CD8-positive, alpha-beta T cell (primary cell): ENCODE measurements at regions of chr4 and their contacts with region 1.

Region 1: DNA sequence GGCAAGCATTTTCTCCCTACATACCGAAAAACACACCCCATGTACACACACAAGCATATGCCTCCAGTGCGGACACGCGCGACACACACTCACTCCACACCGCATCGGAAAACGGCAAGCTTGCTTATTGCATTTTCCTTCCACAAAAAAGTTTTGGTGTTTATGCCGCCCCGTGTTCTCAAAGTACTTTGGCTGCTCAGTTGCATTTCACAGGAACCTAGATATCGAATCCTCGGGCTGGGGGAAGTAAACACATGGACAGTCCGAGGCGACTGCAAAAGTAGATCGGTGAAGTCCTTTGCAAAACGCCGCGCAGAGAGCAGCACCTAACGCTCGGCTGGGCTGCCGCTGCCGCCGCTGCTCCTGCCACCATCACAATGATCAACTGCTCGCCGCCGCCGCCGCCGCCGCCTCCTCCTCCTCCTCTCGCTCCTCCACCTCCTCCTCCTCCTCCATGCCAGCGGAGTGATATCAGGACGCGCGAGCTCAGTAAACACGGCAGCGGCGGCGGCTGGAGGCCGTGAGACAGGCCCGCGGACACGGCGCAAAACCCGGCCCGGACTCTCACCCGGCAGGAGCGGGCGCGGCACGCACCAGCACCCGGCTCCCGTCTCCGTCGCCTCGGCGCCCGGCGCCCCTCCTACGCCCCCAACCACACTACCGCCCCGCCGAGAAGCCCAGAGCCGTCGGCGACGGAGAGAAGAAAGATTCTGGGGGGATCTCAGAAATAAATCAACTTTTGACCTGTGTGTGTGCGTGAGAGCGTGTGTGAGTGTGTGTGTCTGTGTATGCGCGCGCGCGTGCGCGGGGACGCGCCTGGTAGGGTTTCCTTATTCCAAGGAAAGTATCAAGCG is at the start of gene MAML3:
- DNase-seq: peak; percentile 67 to 88 (median 83)
- ATAC-seq: peak; percentile 12
- H3K4me3 ChIP-seq: peak within 1 kb of the TSS; percentile 69 to 75
- H3K4me3 Mint-ChIP-seq: peak within 1 kb of the TSS; percentile 97
- H3K27ac ChIP-seq: peak within 1 kb of the TSS; percentile 12 to 78
- H3K27ac Mint-ChIP-seq: peak within 1 kb of the TSS; percentile 92
- H3K4me1 ChIP-seq: peaks cover 28% of the 10 kb centered on the region
- H3K4me1 Mint-ChIP-seq: peaks cover 40% of the 10 kb centered on the region
- H3K27me3 ChIP-seq: no peaks in the 10 kb centered on the region
- H3K27me3 Mint-ChIP-seq: no peaks in the 10 kb centered on the region
- CTCF ChIP-seq: no peak
- total RNA-seq, gene MAML3: 2.7 TPM

Region 2: DNA sequence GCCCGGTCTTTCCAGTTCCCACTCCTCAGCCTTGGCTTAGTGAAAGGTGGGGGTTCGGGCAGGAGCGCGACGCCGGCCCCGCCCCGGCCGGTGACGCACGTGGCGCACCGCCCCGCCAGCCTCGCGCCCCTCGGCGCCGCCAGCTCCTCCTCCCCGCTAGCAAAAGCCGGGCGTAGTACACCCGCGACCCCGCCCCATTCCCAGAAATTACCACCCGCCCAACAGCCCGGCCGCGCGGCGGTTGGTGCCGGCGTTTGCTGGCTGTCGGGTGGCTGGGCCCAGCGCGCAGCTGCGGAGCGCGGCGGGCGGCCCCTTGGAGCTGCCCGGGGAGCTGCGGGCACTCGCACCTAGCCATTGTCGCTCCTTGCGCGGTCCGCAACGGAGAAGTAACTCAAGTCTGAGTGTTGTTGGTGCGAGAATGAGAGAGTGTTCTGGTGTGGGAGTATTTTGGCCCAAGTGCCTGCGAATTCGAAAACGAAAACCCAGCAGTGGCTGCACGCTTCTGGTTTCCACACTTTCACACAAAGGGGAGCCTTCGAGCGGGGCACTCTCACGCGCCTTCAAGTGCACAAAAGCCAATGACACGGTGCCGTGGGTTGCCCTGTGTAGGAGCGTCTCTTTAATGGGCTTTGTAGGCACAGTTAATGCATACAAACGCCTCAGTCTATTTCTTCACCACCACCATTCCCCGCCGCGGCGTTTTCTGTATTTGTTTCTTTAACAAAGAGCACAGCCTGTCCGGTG is 975.9 kb before region 1 on chr4:
- CTCF ChIA-PET with region 1: no interaction called
- POLR2A ChIA-PET with region 1: no interaction called
- intact Hi-C with region 1: loop called in 1 of 2 experiments (anchors 5 kb)
- DNase-seq: peak; percentile 73 to 94 (median 88)
- ATAC-seq: peak; percentile 73
- H3K4me3 ChIP-seq: peak overlapping the region; percentile 73 to 99
- H3K4me3 Mint-ChIP-seq: peak overlapping the region; percentile 89
- H3K27ac ChIP-seq: peak overlapping the region; percentile 54 to 67
- H3K27ac Mint-ChIP-seq: peak overlapping the region; percentile 85
- H3K4me1 ChIP-seq: peaks cover 5% of the 10 kb centered on the region
- H3K4me1 Mint-ChIP-seq: peaks cover 19% of the 10 kb centered on the region
- H3K27me3 ChIP-seq: no peaks in the 10 kb centered on the region
- H3K27me3 Mint-ChIP-seq: no peaks in the 10 kb centered on the region
- CTCF ChIP-seq: no peak

Region 3: GRCh38 chr4:139214039-139214534 is 939.9 kb before region 1 on chr4:
- CTCF ChIA-PET with region 1: no interaction called
- POLR2A ChIA-PET with region 1: no interaction called
- intact Hi-C with region 1: no loop called
- DNase-seq: peak in 2 of 9 experiments; percentile 5 to 32
- ATAC-seq: no peak
- H3K4me3 ChIP-seq: no peak overlapping the region
- H3K4me3 Mint-ChIP-seq: no peak overlapping the region
- H3K27ac ChIP-seq: no peak overlapping the region
- H3K27ac Mint-ChIP-seq: no peak overlapping the region
- H3K4me1 ChIP-seq: no peaks in the 10 kb centered on the region
- H3K4me1 Mint-ChIP-seq: peaks cover 2% of the 10 kb centered on the region
- H3K27me3 ChIP-seq: peaks cover 0 to 2% of the 10 kb centered on the region in 2 experiments
- H3K27me3 Mint-ChIP-seq: no peaks in the 10 kb centered on the region
- CTCF ChIP-seq: no peak

Region 4: DNA sequence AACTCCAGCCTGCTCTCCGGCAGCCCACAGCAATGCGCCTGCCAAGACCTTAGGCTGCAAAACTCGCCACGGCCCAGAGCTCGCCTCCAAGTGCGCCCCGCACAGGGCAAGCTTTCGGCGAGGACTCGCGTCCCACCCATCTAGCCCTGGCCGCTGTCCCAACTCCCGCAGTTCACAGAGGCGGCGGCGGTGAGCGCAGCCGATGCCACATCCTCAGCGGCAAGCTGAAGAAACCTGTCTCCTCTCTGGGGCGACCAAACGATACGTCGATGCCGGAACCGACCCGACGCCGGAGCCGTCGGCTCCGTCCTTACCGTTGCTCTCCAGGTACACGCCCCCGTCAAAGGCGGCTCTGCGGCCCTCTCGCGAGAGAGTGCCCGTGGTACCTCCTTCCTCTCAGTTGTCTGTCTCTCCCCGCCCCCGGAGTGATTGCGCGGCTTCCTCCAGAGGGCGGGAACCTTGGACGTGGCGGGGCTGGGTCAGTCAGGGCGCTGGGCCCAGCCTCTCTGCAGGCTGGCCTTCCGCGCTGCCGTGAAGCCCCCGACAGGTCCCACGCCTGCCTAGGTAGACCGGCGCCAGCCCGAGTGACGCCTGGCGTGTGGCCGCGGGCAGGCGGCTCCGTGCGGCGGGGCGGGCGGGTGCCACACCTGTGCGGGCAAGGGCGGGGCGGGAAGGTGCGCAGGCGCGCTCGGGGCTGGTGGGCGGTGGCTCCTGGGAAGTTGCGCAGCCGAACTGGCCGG is 700.4 kb before region 1 on chr4:
- CTCF ChIA-PET with region 1: no interaction called
- POLR2A ChIA-PET with region 1: no interaction called
- intact Hi-C with region 1: loop called (anchors 2 to 10 kb)
- DNase-seq: peak; percentile 92 to 98 (median 96)
- ATAC-seq: peak; percentile 86
- H3K4me3 ChIP-seq: peak overlapping the region; percentile 90 to 91
- H3K4me3 Mint-ChIP-seq: peak overlapping the region; percentile 98
- H3K27ac ChIP-seq: peak overlapping the region; percentile 92 to 96
- H3K27ac Mint-ChIP-seq: peak overlapping the region; percentile 99
- H3K4me1 ChIP-seq: peaks cover 41% of the 10 kb centered on the region
- H3K4me1 Mint-ChIP-seq: peaks cover 65% of the 10 kb centered on the region
- H3K27me3 ChIP-seq: no peaks in the 10 kb centered on the region
- H3K27me3 Mint-ChIP-seq: no peaks in the 10 kb centered on the region
- CTCF ChIP-seq: no peak

Region 5: DNA sequence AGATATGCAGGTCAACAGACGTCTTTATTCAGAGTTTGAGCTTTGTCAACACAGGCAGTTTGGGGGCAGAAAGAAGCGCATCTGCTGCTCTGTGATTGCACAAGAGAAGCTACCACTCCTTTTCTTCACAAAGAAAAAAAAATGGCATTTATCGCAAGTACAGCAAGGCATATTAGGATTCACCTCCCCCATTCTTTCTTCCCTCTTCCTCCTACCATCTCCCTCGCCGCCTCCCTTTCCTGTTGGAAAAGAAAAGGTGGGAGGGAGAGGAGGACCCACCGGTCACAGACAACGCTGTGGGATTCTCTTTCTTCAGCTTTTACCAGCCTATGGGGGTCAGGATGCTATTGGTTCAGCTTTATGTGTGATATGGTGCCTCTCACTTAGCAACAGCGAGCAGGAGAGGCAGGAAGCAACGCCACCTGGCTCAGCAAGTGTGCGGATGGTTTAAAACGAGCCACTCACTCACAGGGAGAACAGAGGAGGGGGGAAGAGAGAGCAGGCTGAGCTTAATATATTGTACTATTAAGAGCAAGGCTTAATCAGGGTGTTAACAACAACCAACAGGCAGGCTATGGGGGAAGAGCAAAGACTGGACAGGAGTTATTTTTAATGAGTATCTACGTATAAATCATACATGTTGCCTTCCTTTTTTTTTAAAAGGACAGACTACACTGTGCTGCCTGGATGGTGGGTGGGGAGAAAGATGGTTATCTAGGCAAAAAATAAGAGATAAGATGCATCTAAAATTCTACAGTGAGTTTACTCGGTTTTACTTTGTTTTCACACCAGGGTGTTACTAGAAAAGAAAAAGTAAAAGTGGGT is 104.7 kb before region 1 on chr4:
- CTCF ChIA-PET with region 1: interaction called, 6 read pairs
- POLR2A ChIA-PET with region 1: interaction called, 9 read pairs
- intact Hi-C with region 1: loop called (anchors 1 kb)
- DNase-seq: peak; percentile 8 to 80 (median 58)
- ATAC-seq: peak; percentile 95
- H3K4me3 ChIP-seq: peak overlapping the region; percentile 13 to 55
- H3K4me3 Mint-ChIP-seq: peak overlapping the region; percentile 81
- H3K27ac ChIP-seq: peak overlapping the region; percentile 31 to 55
- H3K27ac Mint-ChIP-seq: peak overlapping the region; percentile 87
- H3K4me1 ChIP-seq: peaks cover 34% of the 10 kb centered on the region
- H3K4me1 Mint-ChIP-seq: peaks cover 49% of the 10 kb centered on the region
- H3K27me3 ChIP-seq: no peaks in the 10 kb centered on the region
- H3K27me3 Mint-ChIP-seq: no peaks in the 10 kb centered on the region
- CTCF ChIP-seq: no peak

Region 6: GRCh38 chr4:140116442-140117104 is 37.4 kb before region 1 on chr4:
- CTCF ChIA-PET with region 1: no interaction called
- POLR2A ChIA-PET with region 1: interaction called, 3 read pairs
- intact Hi-C with region 1: loop called in 1 of 2 experiments (anchors 5 kb)
- DNase-seq: peak in 4 of 9 experiments; percentile 16 to 38 (median 24)
- ATAC-seq: peak; percentile 92
- H3K4me3 ChIP-seq: no peak overlapping the region
- H3K4me3 Mint-ChIP-seq: no peak overlapping the region
- H3K27ac ChIP-seq: no peak overlapping the region
- H3K27ac Mint-ChIP-seq: no peak overlapping the region
- H3K4me1 ChIP-seq: peaks cover 12% of the 10 kb centered on the region
- H3K4me1 Mint-ChIP-seq: peaks cover 20% of the 10 kb centered on the region
- H3K27me3 ChIP-seq: no peaks in the 10 kb centered on the region
- H3K27me3 Mint-ChIP-seq: no peaks in the 10 kb centered on the region
- CTCF ChIP-seq: no peak

Region 7: GRCh38 chr4:140133576-140133975 is 20.4 kb before region 1 on chr4:
- CTCF ChIA-PET with region 1: no interaction called
- POLR2A ChIA-PET with region 1: no interaction called
- intact Hi-C with region 1: no loop called
- DNase-seq: no peak
- ATAC-seq: no peak
- H3K4me3 ChIP-seq: no peak overlapping the region
- H3K4me3 Mint-ChIP-seq: no peak overlapping the region
- H3K27ac ChIP-seq: no peak overlapping the region
- H3K27ac Mint-ChIP-seq: no peak overlapping the region
- H3K4me1 ChIP-seq: no peaks in the 10 kb centered on the region
- H3K4me1 Mint-ChIP-seq: peaks cover 24% of the 10 kb centered on the region
- H3K27me3 ChIP-seq: no peaks in the 10 kb centered on the region
- H3K27me3 Mint-ChIP-seq: no peaks in the 10 kb centered on the region
- CTCF ChIP-seq: no peak

Region 8: DNA sequence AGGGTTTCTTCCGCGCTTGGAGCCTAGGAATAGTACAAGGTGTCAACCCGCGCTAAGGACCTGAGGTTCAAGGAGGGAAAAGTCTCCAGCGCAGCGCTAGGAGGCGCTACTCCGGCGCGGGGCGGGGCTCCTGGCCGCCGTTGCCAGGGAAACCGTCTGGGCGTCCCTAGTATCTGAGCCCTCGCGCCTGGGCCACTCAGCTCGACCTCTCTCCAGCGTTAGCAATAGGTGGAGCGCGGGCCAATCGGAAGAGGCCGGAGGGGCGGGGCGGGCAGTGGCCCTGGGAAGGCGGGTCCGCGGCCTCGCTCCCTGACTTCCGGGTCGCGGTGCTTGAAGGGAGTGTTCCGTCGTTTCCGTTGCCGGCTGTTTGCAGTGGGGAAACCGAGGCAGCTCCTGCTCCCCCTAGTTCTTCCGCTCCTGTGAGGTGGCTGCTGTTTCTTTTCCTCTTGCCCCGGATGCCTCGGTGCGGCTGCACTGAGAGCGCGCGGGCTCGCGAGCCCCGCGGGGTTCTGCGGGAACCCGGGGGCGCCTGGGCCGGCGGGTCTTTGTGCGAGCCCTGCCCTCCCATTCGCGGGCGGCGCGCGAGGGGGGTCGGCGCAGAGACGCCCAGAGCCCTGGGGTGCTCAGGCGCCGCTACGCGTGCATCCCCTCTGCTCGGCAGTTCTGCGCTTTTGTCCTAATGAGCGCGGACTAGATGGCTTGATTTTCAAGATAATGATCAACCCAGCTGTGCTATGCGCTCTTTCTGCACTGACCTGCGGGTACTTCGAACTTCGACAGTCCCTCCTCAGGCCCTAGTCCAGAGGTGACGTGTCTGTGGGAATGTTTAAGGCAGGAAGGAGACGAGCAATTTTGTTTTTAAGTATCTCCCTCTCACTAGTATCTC is 370.2 kb after region 1 on chr4 and contains the start of gene ELMOD2:
- CTCF ChIA-PET with region 1: no interaction called
- POLR2A ChIA-PET with region 1: no interaction called
- intact Hi-C with region 1: loop called (anchors 1 to 5 kb)
- DNase-seq: peak; percentile 93 to 99 (median 97)
- ATAC-seq: peak; percentile 98
- H3K4me3 ChIP-seq: peak within 1 kb of the TSS; percentile 72 to 77
- H3K4me3 Mint-ChIP-seq: peak within 1 kb of the TSS; percentile 89
- H3K27ac ChIP-seq: peak within 1 kb of the TSS; percentile 59 to 63
- H3K27ac Mint-ChIP-seq: peak within 1 kb of the TSS; percentile 86
- H3K4me1 ChIP-seq: peaks cover 9% of the 10 kb centered on the region
- H3K4me1 Mint-ChIP-seq: peaks cover 27% of the 10 kb centered on the region
- H3K27me3 ChIP-seq: no peaks in the 10 kb centered on the region
- H3K27me3 Mint-ChIP-seq: no peaks in the 10 kb centered on the region
- CTCF ChIP-seq: peak; percentile 88
- total RNA-seq, gene ELMOD2: 7.2 to 8.8 TPM

Region 9: GRCh38 chr4:140557831-140558435 is 404.0 kb after region 1 on chr4:
- CTCF ChIA-PET with region 1: no interaction called
- POLR2A ChIA-PET with region 1: no interaction called
- intact Hi-C with region 1: no loop called
- DNase-seq: no peak
- ATAC-seq: no peak
- H3K4me3 ChIP-seq: no peak overlapping the region
- H3K4me3 Mint-ChIP-seq: no peak overlapping the region
- H3K27ac ChIP-seq: no peak overlapping the region
- H3K27ac Mint-ChIP-seq: no peak overlapping the region
- H3K4me1 ChIP-seq: peaks cover 16% of the 10 kb centered on the region
- H3K4me1 Mint-ChIP-seq: peaks cover 18% of the 10 kb centered on the region
- H3K27me3 ChIP-seq: no peaks in the 10 kb centered on the region
- H3K27me3 Mint-ChIP-seq: no peaks in the 10 kb centered on the region
- CTCF ChIP-seq: no peak